CD4-positive, alpha-beta memory T cell (primary cell): ENCODE measurements at regions of chr9 and their contacts with region 1.

Region 1: DNA sequence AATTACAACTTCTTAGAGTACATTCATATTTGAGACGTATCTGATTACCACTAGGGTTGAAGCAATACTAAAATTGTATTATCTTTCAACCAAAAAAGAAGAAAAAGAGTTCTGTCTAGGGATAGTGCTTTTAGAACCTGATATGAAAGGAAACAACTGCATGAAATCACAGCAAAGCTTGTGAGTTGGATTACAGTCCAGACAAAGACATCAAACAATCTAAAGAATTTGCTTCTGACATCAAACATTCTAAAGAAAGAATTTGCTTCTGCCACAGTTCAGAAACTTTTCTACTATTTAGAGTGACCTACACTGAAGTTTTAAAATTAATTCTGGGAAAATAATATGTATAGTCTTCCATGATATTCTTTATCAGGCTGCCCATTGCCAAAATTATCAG is 1141.1 kb upstream of the ACO1 start:
- DNase-seq: no peak
- H3K4me3 ChIP-seq: no peak overlapping the region
- H3K4me3 Mint-ChIP-seq: no peak overlapping the region
- H3K27ac ChIP-seq: no peak overlapping the region
- H3K27ac Mint-ChIP-seq: no peak overlapping the region
- H3K4me1 ChIP-seq: no peaks in the 10 kb centered on the region
- H3K4me1 Mint-ChIP-seq: peaks cover 0 to 2% (median under 1%) of the 10 kb centered on the region in 4 donors
- H3K27me3 ChIP-seq: no peaks in the 10 kb centered on the region
- H3K27me3 Mint-ChIP-seq: no peaks in the 10 kb centered on the region

Region 2: DNA sequence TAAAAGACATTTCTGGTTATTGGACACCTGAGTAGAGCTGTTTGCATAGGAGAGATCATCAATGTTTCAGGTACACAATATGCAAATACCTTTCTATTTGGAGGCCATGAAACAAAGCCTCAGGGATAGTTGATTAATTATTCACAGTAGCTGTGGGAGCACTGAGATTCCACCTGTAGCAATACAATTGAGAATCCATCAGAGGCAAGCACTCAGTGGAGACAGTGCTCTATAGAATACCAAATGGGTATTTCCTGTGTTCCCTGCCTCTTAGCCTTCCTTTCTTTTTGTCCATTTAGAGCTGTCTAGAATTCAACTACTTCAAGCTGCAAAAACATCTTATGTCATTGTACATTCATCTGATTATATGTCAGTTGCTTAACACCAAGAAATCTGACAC is 612.9 kb before region 1 on chr9:
- CTCF ChIA-PET with region 1: no interaction called
- POLR2A ChIA-PET with region 1: no interaction called
- intact Hi-C with region 1: no loop called
- DNase-seq: no peak
- H3K4me3 ChIP-seq: no peak overlapping the region
- H3K4me3 Mint-ChIP-seq: no peak overlapping the region
- H3K27ac ChIP-seq: no peak overlapping the region
- H3K27ac Mint-ChIP-seq: no peak overlapping the region
- H3K4me1 ChIP-seq: no peaks in the 10 kb centered on the region
- H3K4me1 Mint-ChIP-seq: no peaks in the 10 kb centered on the region
- H3K27me3 ChIP-seq: no peaks in the 10 kb centered on the region
- H3K27me3 Mint-ChIP-seq: no peaks in the 10 kb centered on the region

Region 3: GRCh38 chr9:31259824-31260223 is 16.4 kb after region 1 on chr9:
- CTCF ChIA-PET with region 1: no interaction called
- POLR2A ChIA-PET with region 1: interaction called, 3 read pairs
- intact Hi-C with region 1: loop called (anchors 2 kb)
- DNase-seq: peak in 4 of 5 donors; percentile 54 to 76 (median 65)
- H3K4me3 ChIP-seq: no peak overlapping the region
- H3K4me3 Mint-ChIP-seq: peak overlapping the region; percentile 19 to 70 (median 54)
- H3K27ac ChIP-seq: no peak overlapping the region
- H3K27ac Mint-ChIP-seq: peak overlapping the region in 6 of 7 donors; percentile 5 to 84 (median 39)
- H3K4me1 ChIP-seq: peaks cover 20% of the 10 kb centered on the region
- H3K4me1 Mint-ChIP-seq: peaks cover 11 to 13% (median 12%) of the 10 kb centered on the region in 4 donors
- H3K27me3 ChIP-seq: no peaks in the 10 kb centered on the region
- H3K27me3 Mint-ChIP-seq: no peaks in the 10 kb centered on the region